Activated CD4-positive, alpha-beta T cell treated with anti-CD3 and anti-CD28 coated beads for 36 hours (primary cell): ENCODE measurements at regions of chr5 and their contacts with region 1.

Region 1: DNA sequence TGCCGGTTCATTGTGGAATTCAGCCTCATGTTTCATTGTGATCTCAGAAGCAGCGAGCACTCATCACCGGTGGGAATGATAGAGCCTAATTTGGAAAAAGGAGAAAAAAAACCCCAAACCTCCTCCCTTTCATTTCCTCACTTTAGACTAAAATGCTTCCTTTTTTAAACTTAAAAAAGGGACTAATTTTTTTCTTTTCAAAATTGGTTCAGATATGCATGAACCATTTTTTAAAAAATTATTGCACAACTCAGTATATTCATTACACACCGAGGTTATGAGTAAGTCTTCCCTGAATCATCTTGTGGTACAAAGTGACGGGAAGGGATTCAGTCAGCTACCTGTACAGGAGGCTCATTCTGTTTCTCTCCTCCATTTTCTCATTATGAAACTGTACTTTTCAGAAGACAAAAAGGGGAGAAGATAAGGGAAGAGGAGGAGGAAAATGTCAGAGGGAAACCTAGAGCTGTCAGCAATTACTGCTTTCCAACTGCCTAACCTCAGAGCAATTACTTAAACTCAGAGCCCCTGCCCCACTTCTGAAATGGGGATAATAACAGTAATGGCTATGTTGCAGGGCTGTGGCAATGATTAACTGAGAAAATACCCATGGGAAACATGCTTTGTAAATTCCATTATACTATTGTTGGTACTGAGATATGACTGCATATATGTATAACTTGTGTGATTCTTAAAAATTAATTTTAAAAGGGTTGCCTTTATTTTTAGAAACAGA is 24.0 kb downstream of the GALNT10 start:
- DNase-seq: no peak
- ATAC-seq: peak; percentile 93
- H3K4me3 Mint-ChIP-seq: peak overlapping the region; percentile 34
- H3K27ac Mint-ChIP-seq: peak overlapping the region; percentile 87
- H3K4me1 Mint-ChIP-seq: peaks cover 51% of the 10 kb centered on the region
- H3K27me3 Mint-ChIP-seq: no peaks in the 10 kb centered on the region

Region 2: DNA sequence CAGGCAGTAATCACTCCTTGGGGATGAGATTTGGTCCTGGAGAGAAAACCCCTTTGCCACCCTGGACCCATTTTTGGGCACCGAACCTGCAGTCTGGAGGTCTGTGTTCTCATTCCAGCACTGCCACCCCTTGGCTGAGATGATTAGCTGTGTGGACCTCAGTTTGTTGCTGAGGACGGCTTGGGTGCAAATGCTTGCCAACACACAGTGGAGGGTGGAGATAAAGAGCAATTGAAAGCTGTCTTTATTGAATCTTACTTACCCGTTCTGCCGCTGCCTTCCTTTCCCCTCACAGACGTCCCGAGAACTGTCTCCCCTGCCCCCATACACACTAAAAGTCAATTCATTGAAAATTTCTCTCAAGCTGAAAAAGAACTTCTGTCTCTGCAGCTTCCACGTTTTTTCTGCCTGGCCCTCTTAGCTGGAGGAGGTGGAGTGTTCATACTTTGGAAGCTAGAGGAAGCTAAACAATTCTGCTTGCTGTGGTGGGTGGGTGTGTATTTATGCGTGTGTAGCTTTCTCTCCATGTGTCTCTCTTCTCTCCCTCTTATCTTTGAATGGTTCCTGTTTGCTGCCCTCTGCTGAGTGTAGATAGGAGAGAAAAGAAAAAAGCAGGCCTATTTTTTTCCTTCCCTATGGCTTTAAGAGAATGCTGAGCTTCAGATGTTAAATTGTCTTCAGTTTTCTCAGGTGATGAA is 17.4 kb before region 1 on chr5:
- CTCF ChIA-PET with region 1: interaction called, 9 read pairs
- POLR2A ChIA-PET with region 1: interaction called, 4 read pairs
- intact Hi-C with region 1: loop called (anchors 1 kb)
- DNase-seq: peak; percentile 35
- ATAC-seq: no peak
- H3K4me3 Mint-ChIP-seq: peak overlapping the region; percentile 35
- H3K27ac Mint-ChIP-seq: peak overlapping the region; percentile 90
- H3K4me1 Mint-ChIP-seq: peaks cover 71% of the 10 kb centered on the region
- H3K27me3 Mint-ChIP-seq: no peaks in the 10 kb centered on the region

Region 3: GRCh38 chr5:154202379-154203260 is 11.9 kb before region 1 on chr5:
- CTCF ChIA-PET with region 1: interaction called, 9 read pairs
- POLR2A ChIA-PET with region 1: no interaction called
- intact Hi-C with region 1: loop called (anchors 1 kb)
- DNase-seq: peak; percentile 79
- ATAC-seq: peak; percentile 82
- H3K4me3 Mint-ChIP-seq: peak overlapping the region; percentile 64
- H3K27ac Mint-ChIP-seq: peak overlapping the region; percentile 85
- H3K4me1 Mint-ChIP-seq: peaks cover 69% of the 10 kb centered on the region
- H3K27me3 Mint-ChIP-seq: no peaks in the 10 kb centered on the region

Region 4: DNA sequence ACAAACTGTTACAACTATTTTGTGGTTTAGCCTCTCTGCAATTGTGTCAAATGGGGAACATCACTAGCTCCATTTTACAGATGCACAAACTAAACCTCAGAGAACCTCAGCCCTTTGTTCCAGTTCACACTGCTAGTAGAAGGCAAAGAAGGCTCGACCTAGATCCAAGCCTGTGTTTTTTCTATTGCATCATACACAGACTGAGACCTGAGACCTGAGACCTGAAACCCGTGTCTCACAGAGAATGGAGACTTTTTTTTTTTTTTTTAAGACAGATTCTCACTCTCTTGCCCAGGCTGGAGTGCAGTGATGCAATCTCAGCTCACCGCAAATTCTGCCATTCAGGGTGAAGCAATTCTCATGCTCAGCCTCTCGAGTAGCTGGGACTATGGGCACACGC is 96.8 kb after region 1 on chr5:
- CTCF ChIA-PET with region 1: no interaction called
- POLR2A ChIA-PET with region 1: no interaction called
- intact Hi-C with region 1: loop called (anchors 1 to 5 kb)
- DNase-seq: peak; percentile 66
- ATAC-seq: peak; percentile 92
- H3K4me3 Mint-ChIP-seq: no peak overlapping the region
- H3K27ac Mint-ChIP-seq: peak overlapping the region; percentile 53
- H3K4me1 Mint-ChIP-seq: peaks cover 32% of the 10 kb centered on the region
- H3K27me3 Mint-ChIP-seq: no peaks in the 10 kb centered on the region

Region 5: GRCh38 chr5:154493274-154493673 is 278.7 kb after region 1 on chr5:
- CTCF ChIA-PET with region 1: no interaction called
- POLR2A ChIA-PET with region 1: no interaction called
- intact Hi-C with region 1: no loop called
- DNase-seq: no peak
- ATAC-seq: no peak
- H3K4me3 Mint-ChIP-seq: no peak overlapping the region
- H3K27ac Mint-ChIP-seq: no peak overlapping the region
- H3K4me1 Mint-ChIP-seq: no peaks in the 10 kb centered on the region
- H3K27me3 Mint-ChIP-seq: peaks cover 62% of the 10 kb centered on the region